WTC11 (cell line): ENCODE measurements at regions of chr11 and their contacts with region 1.

Region 1: GRCh38 chr11:119067371-119068222 is at the start of gene VPS11:
- DNase-seq: peak; percentile 97
- ATAC-seq: peak; percentile 93
- H3K4me3 Mint-ChIP-seq: peak within 1 kb of the TSS; percentile 96
- H3K27ac Mint-ChIP-seq: peak within 1 kb of the TSS; percentile 95
- H3K4me1 Mint-ChIP-seq: peaks cover 10% of the 10 kb centered on the region
- H3K27me3 Mint-ChIP-seq: no peaks in the 10 kb centered on the region
- CTCF ChIP-seq: no peak
- total RNA-seq, gene VPS11: 17.2 to 20.2 TPM (median 18.4 TPM) in 3 replicates

Region 2: GRCh38 chr11:118971646-118972045 is 96.0 kb before region 1 on chr11 and contains the start of gene FOXR1:
- CTCF ChIA-PET with region 1: no interaction called
- POLR2A ChIA-PET with region 1: no interaction called
- DNase-seq: no peak
- ATAC-seq: no peak
- H3K4me3 Mint-ChIP-seq: no peak within 1 kb of the TSS
- H3K27ac Mint-ChIP-seq: no peak within 1 kb of the TSS
- H3K4me1 Mint-ChIP-seq: no peaks in the 10 kb centered on the region
- H3K27me3 Mint-ChIP-seq: peaks cover 2% of the 10 kb centered on the region; the same call in 1 of the 2 replicates
- CTCF ChIP-seq: no peak
- total RNA-seq, gene FOXR1: not detected in 3 replicates

Region 3: GRCh38 chr11:119057000-119057769 is 10.4 kb before region 1 on chr11 and contains the start of gene HYOU1:
- CTCF ChIA-PET with region 1: interaction called, 14 read pairs
- POLR2A ChIA-PET with region 1: interaction called, 20 read pairs
- DNase-seq: peak; percentile 99
- ATAC-seq: peak; percentile 96
- H3K4me3 Mint-ChIP-seq: peak within 1 kb of the TSS; percentile 89
- H3K27ac Mint-ChIP-seq: peak within 1 kb of the TSS; percentile 96
- H3K4me1 Mint-ChIP-seq: peaks cover 17% of the 10 kb centered on the region
- H3K27me3 Mint-ChIP-seq: no peaks in the 10 kb centered on the region
- CTCF ChIP-seq: no peak
- total RNA-seq, gene HYOU1: 212 to 276 TPM (median 218 TPM) in 3 replicates

Region 4: DNA sequence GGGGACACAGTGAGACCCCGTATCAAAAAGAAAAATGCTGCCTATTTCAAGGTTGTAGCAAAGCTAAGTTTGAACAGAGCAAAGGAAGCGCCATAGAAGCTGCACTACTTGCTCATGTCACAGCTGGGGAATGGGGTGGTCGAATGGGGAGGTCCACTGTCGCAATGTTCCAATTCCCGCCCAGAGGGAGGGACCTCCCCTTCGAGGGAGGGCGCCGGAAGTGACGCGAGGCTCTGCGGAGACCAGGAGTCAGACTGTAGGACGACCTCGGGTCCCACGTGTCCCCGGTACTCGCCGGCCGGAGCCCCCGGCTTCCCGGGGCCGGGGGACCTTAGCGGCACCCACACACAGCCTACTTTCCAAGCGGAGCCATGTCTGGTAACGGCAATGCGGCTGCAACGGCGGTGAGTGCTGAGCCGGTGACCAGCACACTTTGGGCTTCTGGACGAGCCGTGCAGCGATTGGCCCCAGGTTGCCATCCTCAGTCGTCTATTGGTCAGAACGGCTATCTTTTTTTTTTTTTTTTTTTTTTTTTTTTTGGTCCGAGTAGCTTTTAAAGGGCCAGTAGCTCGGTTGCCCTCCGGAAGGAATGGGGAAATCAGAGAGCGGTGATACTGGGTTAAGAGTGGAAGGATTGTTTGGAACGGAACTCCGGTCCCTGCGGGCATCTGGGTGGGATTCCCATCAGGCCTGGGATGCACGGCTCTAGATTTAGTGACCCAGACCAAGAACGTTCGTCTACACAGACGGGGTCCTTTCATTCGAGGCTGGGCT is 17.3 kb after region 1 on chr11 and contains the start of gene HMBS:
- CTCF ChIA-PET with region 1: interaction called, 16 read pairs
- POLR2A ChIA-PET with region 1: interaction called, 13 read pairs
- DNase-seq: peak; percentile 87
- ATAC-seq: peak; percentile 89
- H3K4me3 Mint-ChIP-seq: peak within 1 kb of the TSS; percentile 98
- H3K27ac Mint-ChIP-seq: peak within 1 kb of the TSS; percentile 98
- H3K4me1 Mint-ChIP-seq: peaks cover 3% of the 10 kb centered on the region; the same call in 1 of the 2 replicates
- H3K27me3 Mint-ChIP-seq: no peaks in the 10 kb centered on the region
- CTCF ChIP-seq: no peak
- total RNA-seq, gene HMBS: 55.4 to 64.4 TPM (median 62.3 TPM) in 3 replicates

Region 5: GRCh38 chr11:119101759-119102423 is 34.3 kb after region 1 on chr11 and contains the start of gene DPAGT1:
- CTCF ChIA-PET with region 1: interaction called, 10 read pairs
- POLR2A ChIA-PET with region 1: interaction called, 3 read pairs
- DNase-seq: peak; percentile 88
- ATAC-seq: peak; percentile 83
- H3K4me3 Mint-ChIP-seq: peak within 1 kb of the TSS; percentile 92
- H3K27ac Mint-ChIP-seq: peak within 1 kb of the TSS; percentile 100
- H3K4me1 Mint-ChIP-seq: peaks cover 33% of the 10 kb centered on the region
- H3K27me3 Mint-ChIP-seq: no peaks in the 10 kb centered on the region; the same call in 1 of the 2 replicates
- CTCF ChIP-seq: no peak
- total RNA-seq, gene DPAGT1: 59.6 to 64.6 TPM (median 63.5 TPM) in 3 replicates